PC-3 (cell line): ENCODE measurements at regions of chr19 and their contacts with region 1.

Region 1: GRCh38 chr19:38929929-38930775 is at the start of gene SARS2:
- DNase-seq: peak; percentile 90
- ATAC-seq: peak; percentile 60
- H3K4me3 ChIP-seq: peak within 1 kb of the TSS; percentile 78
- H3K27ac ChIP-seq: peak within 1 kb of the TSS; percentile 83
- H3K4me1 ChIP-seq: no peaks in the 10 kb centered on the region; the same call in 1 of the 2 replicates
- H3K27me3 ChIP-seq: no peaks in the 10 kb centered on the region
- CTCF ChIP-seq: peak; percentile 94
- total RNA-seq, gene SARS2: 26.7 and 28.3 TPM in 2 replicates

Region 2: DNA sequence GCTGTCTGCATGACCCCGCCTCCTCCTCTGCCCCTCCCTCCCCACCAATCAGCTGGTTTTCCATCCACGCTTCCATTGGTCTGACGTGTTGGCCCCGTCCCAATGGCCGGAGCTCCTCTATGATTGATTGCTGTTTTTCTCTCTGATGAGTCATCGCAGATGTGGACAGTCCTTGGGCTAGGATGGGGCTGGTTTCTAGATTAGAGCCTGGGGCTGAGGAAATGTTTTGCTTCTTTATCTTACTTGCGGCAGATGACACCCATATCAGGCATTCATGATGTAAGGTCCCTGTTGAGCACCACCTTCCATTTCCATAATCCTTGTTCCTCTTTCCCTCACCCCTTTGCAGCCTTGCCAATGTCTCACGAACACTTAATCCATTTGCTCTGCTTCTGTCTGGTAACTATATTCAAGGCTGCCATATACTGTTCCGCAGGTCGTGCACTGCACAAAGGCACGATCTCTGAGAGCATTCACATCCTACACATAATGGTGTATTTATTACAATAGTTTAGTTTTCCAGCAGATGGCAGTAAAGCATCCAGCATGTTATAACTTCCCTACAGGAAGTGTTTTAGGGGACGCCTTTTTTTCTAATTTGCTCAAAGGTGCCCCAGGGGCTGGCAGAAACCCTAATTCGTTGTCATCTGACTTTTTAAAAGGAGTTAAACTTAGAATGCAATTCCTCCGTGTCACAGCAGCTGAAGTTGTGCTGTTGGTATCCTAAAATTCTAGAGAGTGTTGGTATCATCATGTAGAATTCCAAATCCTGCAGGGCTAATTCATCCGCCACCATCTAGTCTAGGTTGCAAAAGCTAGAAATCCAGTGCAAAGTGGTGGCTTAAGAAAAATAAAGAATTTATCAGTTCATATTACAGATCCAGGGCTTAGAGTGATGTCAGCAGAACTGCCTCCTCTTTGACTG is 385.9 kb before region 1 on chr19:
- CTCF ChIA-PET with region 1: interaction called, 3 read pairs
- POLR2A ChIA-PET with region 1: no interaction called
- intact Hi-C with region 1: loop called (anchors 10 kb)
- DNase-seq: peak; percentile 80
- ATAC-seq: peak; percentile 92
- H3K4me3 ChIP-seq: peak overlapping the region; percentile 47; the same call in 1 of the 2 replicates
- H3K27ac ChIP-seq: peak overlapping the region; percentile 32; the same call in 1 of the 2 replicates
- H3K4me1 ChIP-seq: peaks cover 4% of the 10 kb centered on the region; the same call in 1 of the 2 replicates
- H3K27me3 ChIP-seq: no peaks in the 10 kb centered on the region
- CTCF ChIP-seq: peak; percentile 74

Region 3: GRCh38 chr19:38849860-38850435 is 80.2 kb before region 1 on chr19 and contains the start of gene HNRNPL:
- CTCF ChIA-PET with region 1: no interaction called
- POLR2A ChIA-PET with region 1: interaction called, 4 read pairs
- intact Hi-C with region 1: loop called (anchors 1 kb)
- DNase-seq: peak; percentile 99
- ATAC-seq: peak; percentile 58
- H3K4me3 ChIP-seq: peak within 1 kb of the TSS; percentile 83
- H3K27ac ChIP-seq: peak within 1 kb of the TSS; percentile 97
- H3K4me1 ChIP-seq: peaks cover 28% of the 10 kb centered on the region
- H3K27me3 ChIP-seq: no peaks in the 10 kb centered on the region
- CTCF ChIP-seq: 0 out of 2 replicates have a peak, but pooled peaks have one; percentile 9
- total RNA-seq, gene HNRNPL: 315 and 331 TPM in 2 replicates

Region 4: DNA sequence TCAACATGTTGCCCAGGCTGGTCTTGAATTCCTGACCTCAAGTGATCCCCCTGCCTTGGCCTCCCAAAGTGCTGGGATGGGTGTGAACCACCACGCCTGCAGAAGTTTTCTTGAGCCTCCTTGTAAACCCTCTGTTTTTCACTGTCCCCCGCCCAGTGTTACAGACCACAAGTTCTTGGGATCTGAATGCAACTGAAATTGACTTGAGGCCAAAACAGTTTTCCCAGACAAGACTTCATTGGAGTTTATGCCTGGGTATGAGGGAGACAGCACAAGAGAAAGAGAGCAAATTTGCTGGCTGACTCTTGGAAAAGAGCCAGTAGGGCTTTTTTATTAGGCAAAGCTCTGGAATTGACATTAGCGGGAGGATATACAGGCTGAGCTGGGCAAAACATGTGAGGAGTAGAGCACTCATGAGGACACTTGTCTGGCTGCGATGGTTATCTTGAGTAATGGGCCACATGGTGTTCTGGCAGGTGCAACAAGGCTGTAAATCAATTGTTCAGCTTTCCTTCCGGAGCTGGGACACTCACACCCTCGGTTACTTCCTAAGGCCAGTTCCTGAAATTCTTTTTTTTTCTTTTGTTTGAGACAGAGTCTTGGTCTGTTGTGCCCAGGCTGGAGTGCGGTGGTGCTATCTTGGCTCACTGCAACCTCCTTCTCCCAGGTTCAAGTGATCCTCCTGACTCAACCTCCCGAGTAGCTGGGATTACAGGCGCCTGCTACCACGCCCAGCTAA is 67.7 kb before region 1 on chr19:
- CTCF ChIA-PET with region 1: interaction called, 3 read pairs
- POLR2A ChIA-PET with region 1: interaction called, 22 read pairs
- intact Hi-C with region 1: no loop called
- DNase-seq: peak; percentile 64
- ATAC-seq: peak; percentile 66
- H3K4me3 ChIP-seq: no peak overlapping the region
- H3K27ac ChIP-seq: no peak overlapping the region
- H3K4me1 ChIP-seq: peaks cover 18% of the 10 kb centered on the region
- H3K27me3 ChIP-seq: no peaks in the 10 kb centered on the region
- CTCF ChIP-seq: no peak

Region 5: GRCh38 chr19:38899447-38900219 is 30.5 kb before region 1 on chr19 and contains the starts of genes NFKBIB and SIRT2:
- CTCF ChIA-PET with region 1: interaction called, 7 read pairs
- POLR2A ChIA-PET with region 1: interaction called, 3 read pairs
- intact Hi-C with region 1: loop called (anchors 1 kb)
- DNase-seq: peak; percentile 99
- ATAC-seq: peak; percentile 95
- H3K4me3 ChIP-seq: peak within 1 kb of the TSS; percentile 78
- H3K27ac ChIP-seq: 0 out of 2 replicates have a peak within 1 kb of the TSS, but pooled peaks have one; percentile 12
- H3K4me1 ChIP-seq: 0 out of 2 replicates have a peak, but pooled peaks cover 3% of the 10 kb centered on the region
- H3K27me3 ChIP-seq: no peaks in the 10 kb centered on the region
- CTCF ChIP-seq: no peak
- total RNA-seq, gene NFKBIB: 43.7 and 44.9 TPM in 2 replicates
- total RNA-seq, gene SIRT2: 37.9 and 55.2 TPM in 2 replicates